Activated CD8-positive, alpha-beta memory T cell treated with anti-CD3 and anti-CD28 coated beads, Interleukin-2, amount 10 ng/mL, durations not matched to agents 7 days and 5 days (primary cell): ENCODE measurements at regions of chr22 and their contacts with region 1.

Region 1: DNA sequence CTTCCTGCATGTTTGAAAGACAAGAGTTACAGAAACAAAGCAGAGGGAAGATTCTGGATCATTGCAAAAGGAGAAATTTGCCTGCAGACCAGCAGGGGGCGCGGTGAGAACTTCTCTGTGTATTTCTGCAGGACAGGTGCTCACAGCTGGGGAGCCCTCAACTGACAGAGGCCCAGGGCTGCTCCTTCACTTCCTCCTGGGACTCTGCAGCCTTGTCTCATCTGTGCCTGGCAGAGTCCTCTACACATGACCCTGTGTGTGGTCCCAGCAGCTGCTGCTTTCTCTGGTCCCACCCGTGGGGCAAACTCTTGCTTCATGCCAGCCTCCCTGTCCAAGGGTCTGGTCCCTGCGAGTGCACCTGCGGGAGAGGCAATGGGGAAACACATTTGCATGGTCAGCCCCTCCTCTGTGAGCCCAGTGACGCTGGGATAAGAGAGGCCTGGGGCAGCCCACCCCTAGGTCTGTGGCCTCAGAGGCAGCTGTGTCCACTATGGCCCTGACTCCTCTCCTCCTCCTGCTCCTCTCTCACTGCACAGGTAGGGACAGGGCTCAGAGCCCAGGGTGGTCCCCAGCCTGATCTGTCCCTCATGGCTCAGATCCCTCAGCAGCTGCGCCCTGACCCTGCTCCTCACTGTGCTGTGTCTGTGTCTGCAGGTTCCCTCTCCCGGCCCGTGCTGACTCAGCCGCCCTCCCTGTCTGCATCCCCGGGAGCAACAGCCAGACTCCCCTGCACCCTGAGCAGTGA is 43.2 kb upstream of the VPREB1 start:
- DNase-seq: peak; percentile 75
- ATAC-seq: peak; percentile 71
- H3K4me3 Mint-ChIP-seq: no peak overlapping the region
- H3K27ac Mint-ChIP-seq: no peak overlapping the region
- H3K4me1 Mint-ChIP-seq: peaks cover 11% of the 10 kb centered on the region
- H3K27me3 Mint-ChIP-seq: peaks cover 18% of the 10 kb centered on the region

Region 2: GRCh38 chr22:22030493-22031182 is 170.7 kb before region 1 on chr22:
- CTCF ChIA-PET with region 1: no interaction called
- DNase-seq: no peak
- ATAC-seq: no peak
- H3K4me3 Mint-ChIP-seq: no peak overlapping the region
- H3K27ac Mint-ChIP-seq: no peak overlapping the region
- H3K4me1 Mint-ChIP-seq: no peaks in the 10 kb centered on the region
- H3K27me3 Mint-ChIP-seq: peaks cover 17% of the 10 kb centered on the region

Region 3: DNA sequence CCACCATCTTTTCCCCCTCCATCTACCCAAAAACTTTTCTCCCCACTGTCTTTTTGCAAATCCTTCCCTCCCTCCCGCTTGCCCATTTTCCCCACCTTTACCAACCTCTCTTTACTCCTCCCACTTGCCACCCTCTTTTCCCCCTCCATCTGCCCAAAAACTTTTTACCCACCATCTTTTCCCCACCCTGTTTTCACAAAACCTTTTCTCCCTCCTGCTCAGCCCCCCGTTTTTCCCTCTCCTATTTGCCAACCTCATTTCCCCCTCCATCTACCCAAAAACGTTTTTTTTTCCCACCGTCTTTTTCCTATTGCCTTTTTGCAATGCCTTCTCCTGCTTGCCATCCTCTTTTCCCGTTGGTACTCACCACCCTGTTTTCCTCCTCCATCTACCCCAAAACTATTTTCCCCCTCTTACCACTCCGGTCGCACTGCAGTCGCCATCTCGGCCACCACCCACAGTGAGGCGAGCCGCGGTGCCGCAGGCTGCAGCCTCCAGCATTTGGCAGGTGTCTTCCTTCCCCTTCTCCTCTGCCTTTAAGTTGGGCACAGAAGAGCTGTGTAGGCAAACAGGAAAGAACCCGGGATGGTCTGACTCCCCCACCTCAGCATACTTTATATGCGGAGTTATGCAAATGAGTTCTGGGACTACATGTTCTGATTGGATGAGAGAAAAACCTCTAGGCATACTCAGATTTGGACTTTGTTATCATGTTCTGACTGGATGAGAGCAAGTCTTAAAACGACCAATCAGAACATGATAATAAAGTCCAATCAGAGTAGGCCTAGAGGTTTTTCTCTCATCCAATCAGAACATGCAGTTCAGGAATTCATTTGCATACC is 78.0 kb before region 1 on chr22:
- CTCF ChIA-PET with region 1: no interaction called
- DNase-seq: no peak
- ATAC-seq: no peak
- H3K4me3 Mint-ChIP-seq: no peak overlapping the region
- H3K27ac Mint-ChIP-seq: no peak overlapping the region
- H3K4me1 Mint-ChIP-seq: peaks cover 6% of the 10 kb centered on the region
- H3K27me3 Mint-ChIP-seq: peaks cover 50% of the 10 kb centered on the region

Region 4: DNA sequence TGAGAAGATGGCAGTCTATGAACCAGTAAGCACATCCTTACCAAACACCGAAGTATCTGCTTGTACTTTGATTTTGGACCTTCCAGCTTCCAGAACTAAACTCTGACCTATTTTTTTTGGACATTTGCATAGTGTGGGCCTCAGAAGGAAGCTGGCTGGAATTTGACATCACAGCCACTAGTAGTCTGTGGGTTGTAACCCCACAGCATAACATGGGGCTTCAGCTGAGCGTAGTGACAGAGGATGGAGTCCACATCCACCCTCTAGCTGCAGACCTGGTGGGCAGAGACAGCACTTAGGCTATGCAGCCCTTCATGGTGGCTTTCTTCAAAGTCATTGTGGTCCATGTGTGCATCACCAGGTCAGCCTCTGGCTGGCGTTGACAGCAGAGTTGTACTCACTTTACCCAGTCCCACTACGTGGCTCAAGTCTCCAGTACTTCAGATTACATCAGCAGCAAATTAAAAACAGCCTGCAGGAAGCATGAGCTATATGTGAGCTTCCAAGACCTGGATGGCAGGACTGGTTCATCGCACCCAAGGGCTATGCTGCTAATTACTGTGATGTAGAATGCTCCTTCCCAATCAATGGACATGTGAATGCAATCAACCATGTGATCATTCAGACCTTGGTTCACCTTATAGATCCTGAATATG is 15.4 kb before region 1 on chr22:
- CTCF ChIA-PET with region 1: interaction called, 15 read pairs
- DNase-seq: no peak
- ATAC-seq: no peak
- H3K4me3 Mint-ChIP-seq: no peak overlapping the region
- H3K27ac Mint-ChIP-seq: no peak overlapping the region
- H3K4me1 Mint-ChIP-seq: no peaks in the 10 kb centered on the region
- H3K27me3 Mint-ChIP-seq: peaks cover 66% of the 10 kb centered on the region

Region 5: GRCh38 chr22:22397277-22397870 is 196.0 kb after region 1 on chr22:
- CTCF ChIA-PET with region 1: no interaction called
- DNase-seq: no peak
- ATAC-seq: no peak
- H3K4me3 Mint-ChIP-seq: no peak overlapping the region
- H3K27ac Mint-ChIP-seq: no peak overlapping the region
- H3K4me1 Mint-ChIP-seq: no peaks in the 10 kb centered on the region
- H3K27me3 Mint-ChIP-seq: peaks cover 30% of the 10 kb centered on the region

Region 6: DNA sequence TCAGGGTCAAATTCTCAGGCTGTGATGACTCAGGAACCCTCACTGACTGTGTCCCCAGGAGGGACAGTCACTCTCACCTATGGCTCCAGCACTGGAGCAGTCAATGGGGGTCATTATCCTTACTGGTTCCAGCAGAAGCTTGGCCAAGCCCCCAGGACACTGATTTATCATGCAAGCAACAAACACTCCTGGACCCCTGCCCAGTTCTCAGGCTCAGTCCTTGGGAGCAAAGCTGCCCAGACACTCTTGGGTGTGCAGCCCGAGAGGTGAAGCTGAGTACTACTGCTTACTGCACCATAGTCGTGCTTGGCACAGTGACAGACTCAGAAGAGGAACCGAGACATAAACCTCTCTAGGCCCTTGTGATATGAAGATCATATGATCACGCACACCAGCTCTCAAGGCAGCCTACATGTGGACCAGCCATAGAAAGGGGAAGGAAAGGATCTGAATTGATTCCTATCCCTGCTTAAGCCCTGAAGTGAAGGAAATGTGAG is 249.0 kb after region 1 on chr22:
- CTCF ChIA-PET with region 1: no interaction called
- DNase-seq: no peak
- ATAC-seq: no peak
- H3K4me3 Mint-ChIP-seq: no peak overlapping the region
- H3K27ac Mint-ChIP-seq: no peak overlapping the region
- H3K4me1 Mint-ChIP-seq: no peaks in the 10 kb centered on the region
- H3K27me3 Mint-ChIP-seq: peaks cover 75% of the 10 kb centered on the region